ENCODE measurements at regions of chr6 and their contacts with region 1.

Region 1: GRCh38 chr6:12011276-12012076 is 636 bp upstream of the HIVEP1 start:
- DNase-seq: peak; percentile 99
- ATAC-seq: peak; percentile 77
- H3K4me3 Mint-ChIP-seq: peak overlapping the region; percentile 96
- H3K27ac Mint-ChIP-seq: peak overlapping the region; percentile 98
- H3K4me1 Mint-ChIP-seq: peaks cover 39% of the 10 kb centered on the region
- H3K27me3 Mint-ChIP-seq: no peaks in the 10 kb centered on the region

Region 2: GRCh38 chr6:11537229-11538051 is 474.0 kb before region 1 on chr6 and contains the start of gene TMEM170B:
- CTCF ChIA-PET with region 1: no interaction called
- POLR2A ChIA-PET with region 1: no interaction called
- intact Hi-C with region 1: loop called in 1 of 2 experiments (anchors 1 kb)
- DNase-seq: peak; percentile 95
- ATAC-seq: peak; percentile 96
- H3K4me3 Mint-ChIP-seq: peak within 1 kb of the TSS; percentile 76
- H3K27ac Mint-ChIP-seq: no peak within 1 kb of the TSS
- H3K4me1 Mint-ChIP-seq: peaks cover 5% of the 10 kb centered on the region
- H3K27me3 Mint-ChIP-seq: peaks cover 8% of the 10 kb centered on the region
- total RNA-seq, gene TMEM170B: 0.98 to 1.3 TPM

Region 3: GRCh38 chr6:11785774-11786579 is 225.5 kb before region 1 on chr6:
- CTCF ChIA-PET with region 1: no interaction called
- POLR2A ChIA-PET with region 1: no interaction called
- intact Hi-C with region 1: loop called in 1 of 2 experiments (anchors 1 kb)
- DNase-seq: peak; percentile 68
- ATAC-seq: peak; percentile 89
- H3K4me3 Mint-ChIP-seq: peak overlapping the region; percentile 55
- H3K27ac Mint-ChIP-seq: peak overlapping the region; percentile 52
- H3K4me1 Mint-ChIP-seq: peaks cover 11% of the 10 kb centered on the region
- H3K27me3 Mint-ChIP-seq: no peaks in the 10 kb centered on the region

Region 4: GRCh38 chr6:11938285-11938890 is 73.1 kb before region 1 on chr6:
- CTCF ChIA-PET with region 1: no interaction called
- POLR2A ChIA-PET with region 1: no interaction called
- intact Hi-C with region 1: no loop called
- DNase-seq: no peak
- ATAC-seq: no peak
- H3K4me3 Mint-ChIP-seq: no peak overlapping the region
- H3K27ac Mint-ChIP-seq: no peak overlapping the region
- H3K4me1 Mint-ChIP-seq: peaks cover 11% of the 10 kb centered on the region
- H3K27me3 Mint-ChIP-seq: no peaks in the 10 kb centered on the region

Region 5: DNA sequence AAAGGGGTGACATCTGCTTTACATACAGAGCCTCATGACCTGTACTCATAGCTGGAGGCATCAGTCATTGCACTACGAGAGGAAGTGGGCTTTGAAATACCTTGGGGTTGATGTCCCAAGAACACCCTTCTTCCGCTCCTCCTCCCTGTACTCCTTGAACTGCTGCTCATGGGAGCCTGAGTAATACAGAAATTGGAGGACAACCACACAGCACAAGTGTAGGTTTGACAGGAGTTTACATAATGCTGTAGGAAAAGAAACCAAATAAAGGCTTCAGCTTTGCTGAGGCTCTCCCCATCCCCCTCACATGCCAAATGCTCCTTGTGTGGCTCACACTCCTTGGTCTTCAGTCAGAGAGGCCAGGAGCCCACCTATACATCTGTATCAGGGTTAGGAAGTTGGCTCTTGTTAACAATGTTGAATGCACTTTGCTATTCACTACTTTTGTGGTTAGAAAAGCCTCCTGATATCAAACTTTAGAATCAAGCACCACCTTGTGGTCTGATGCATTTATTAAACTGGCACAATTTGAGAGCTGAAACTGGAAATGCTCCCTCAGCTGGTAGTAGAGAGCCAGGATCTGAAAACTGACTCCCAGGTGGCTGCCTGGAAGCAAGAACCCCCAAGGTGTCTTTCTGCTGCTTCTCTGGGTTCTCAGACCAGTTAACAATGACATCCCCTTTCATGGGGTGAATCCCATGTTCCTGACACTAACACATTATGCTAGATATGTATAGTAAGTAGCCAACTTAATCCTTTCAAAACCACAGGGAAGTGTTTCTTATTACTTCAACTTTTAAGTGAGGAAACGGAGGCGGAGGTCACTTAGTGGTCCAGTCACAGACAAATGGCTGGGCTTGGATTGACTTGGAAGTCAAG is 222.5 kb after region 1 on chr6:
- CTCF ChIA-PET with region 1: interaction called, 3 read pairs
- POLR2A ChIA-PET with region 1: no interaction called
- intact Hi-C with region 1: loop called (anchors 2 kb)
- DNase-seq: peak; percentile 43
- ATAC-seq: peak; percentile 93
- H3K4me3 Mint-ChIP-seq: no peak overlapping the region
- H3K27ac Mint-ChIP-seq: no peak overlapping the region
- H3K4me1 Mint-ChIP-seq: peaks cover 40% of the 10 kb centered on the region
- H3K27me3 Mint-ChIP-seq: no peaks in the 10 kb centered on the region

Measured in activated CD4-positive, alpha-beta T cell treated with anti-CD3 and anti-CD28 coated beads for 36 hours (primary cell).